AG04449 (cell line): ENCODE measurements at regions of chr10 and their contacts with region 1.

Region 1: DNA sequence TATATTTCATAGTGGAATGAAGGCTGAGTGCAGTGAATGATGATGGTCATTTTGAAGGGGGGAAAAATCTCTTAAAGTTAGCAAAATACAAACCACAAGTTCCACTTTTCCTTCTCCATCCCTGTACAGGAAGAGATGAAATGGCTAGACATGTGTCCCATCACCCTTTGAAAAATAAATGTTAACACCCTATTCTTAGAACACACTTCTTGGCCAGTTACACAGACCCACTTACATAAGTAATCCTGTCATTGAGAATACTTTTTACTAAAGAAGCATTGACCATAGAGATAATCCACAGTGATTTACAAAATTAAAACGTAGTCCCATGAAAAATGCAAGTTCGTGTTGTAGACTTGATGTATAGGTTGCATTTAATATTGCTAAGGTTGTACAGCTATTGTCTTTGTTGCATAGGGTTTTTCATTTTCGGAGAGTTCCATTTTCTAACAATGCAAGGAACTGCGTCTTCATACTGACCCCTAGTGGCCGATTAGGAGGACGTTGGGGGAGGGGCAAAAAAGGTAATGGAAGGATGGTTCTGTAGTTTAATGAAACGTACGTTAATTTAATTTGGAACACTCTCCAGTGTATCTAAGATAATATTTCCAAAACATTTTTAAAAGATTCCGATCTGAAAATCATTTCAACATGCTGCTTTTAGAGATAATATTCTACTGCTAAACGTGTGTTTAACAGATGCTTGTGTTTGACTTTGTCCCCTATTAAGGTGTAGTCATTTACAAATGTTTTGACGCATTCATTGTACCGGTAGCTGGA is 60.9 kb downstream of the ARMC3 start:
- DNase-seq: no peak
- H3K4me3 ChIP-seq: no peak overlapping the region
- CTCF ChIP-seq: peak; percentile 76

Region 2: DNA sequence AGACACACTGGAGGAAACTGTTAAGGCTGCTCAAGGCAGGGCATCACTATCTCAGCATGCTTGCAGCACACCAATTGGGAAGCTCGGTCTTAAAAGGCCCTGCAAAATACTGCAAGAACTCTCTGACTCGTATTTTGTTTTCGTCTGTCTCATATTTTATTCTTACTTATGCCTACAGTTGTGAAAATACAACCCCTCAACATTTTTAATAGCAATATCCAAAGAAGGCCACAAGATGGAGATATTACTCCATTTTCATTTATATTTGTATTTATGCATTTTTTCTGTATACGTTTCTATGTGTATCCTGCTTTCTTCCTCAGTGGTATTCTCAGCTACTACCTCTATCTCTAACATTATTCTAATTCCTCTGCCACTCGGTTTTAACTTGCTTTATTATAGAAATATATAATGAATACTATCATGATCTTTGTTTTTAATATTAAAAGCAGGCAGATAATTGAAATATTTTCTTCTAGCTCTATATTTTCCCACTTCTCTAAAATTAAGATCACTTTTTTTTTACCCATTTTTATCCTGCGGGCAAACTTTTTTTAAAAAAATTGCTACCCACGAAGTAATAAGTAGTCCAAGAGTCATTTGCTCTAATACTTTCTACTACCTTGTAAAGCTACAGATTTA is 995.3 kb before region 1 on chr10:
- CTCF ChIA-PET with region 1: interaction called, 36 read pairs
- POLR2A ChIA-PET with region 1: no interaction called
- DNase-seq: no peak
- H3K4me3 ChIP-seq: no peak overlapping the region
- CTCF ChIP-seq: no peak

Region 3: DNA sequence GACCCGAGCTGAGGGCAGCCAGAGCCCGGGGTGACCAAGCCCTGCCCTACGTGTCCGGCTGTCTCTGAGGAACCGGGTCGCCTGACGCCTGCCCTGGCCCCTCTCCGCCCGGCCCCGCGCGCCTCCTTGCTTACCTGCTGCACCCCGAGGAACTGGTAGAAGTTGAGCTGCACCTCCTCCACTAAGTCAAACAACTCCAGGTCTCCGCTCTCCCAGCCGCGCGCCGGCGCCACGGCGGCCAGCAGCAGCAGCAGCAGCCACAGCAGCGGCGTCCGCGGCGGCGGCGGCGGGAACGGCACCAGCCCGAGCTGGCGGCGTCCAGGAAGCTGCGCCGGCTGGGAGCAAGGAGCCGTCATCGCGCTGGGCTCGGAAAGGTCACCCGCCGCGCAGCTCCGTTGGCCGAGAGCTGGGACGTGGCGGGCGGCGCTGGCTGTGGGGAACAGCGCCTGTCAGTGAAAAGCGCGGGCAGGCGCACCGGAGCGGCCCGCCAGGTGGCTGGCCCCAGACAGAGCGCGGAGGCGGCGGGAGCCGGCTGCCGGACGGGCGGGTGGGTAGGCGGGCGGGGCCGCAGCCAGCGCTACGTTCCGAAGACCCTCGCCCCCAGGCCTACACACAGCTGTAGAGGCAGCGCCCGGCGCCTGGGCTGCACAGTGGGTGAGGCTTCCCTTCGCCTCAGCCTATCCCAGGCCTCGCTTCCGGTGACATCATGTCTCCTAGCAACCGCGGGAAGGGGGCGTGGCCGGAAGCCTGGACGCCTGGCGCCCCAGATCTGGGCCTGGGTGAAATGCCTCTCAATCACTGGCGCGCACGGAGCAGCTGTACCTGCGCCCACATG is 985.5 kb before region 1 on chr10 and contains the start of gene DNAJC1:
- CTCF ChIA-PET with region 1: interaction called, 90 read pairs
- POLR2A ChIA-PET with region 1: no interaction called
- DNase-seq: peak; percentile 46
- H3K4me3 ChIP-seq: peak within 1 kb of the TSS; percentile 89
- CTCF ChIP-seq: no peak

Region 4: GRCh38 chr10:22010973-22011408 is 977.8 kb before region 1 on chr10:
- CTCF ChIA-PET with region 1: interaction called, 90 read pairs
- POLR2A ChIA-PET with region 1: no interaction called
- DNase-seq: no peak
- H3K4me3 ChIP-seq: no peak overlapping the region
- CTCF ChIP-seq: no peak

Region 5: GRCh38 chr10:22573820-22574569 is 414.8 kb before region 1 on chr10:
- CTCF ChIA-PET with region 1: interaction called, 90 read pairs
- POLR2A ChIA-PET with region 1: no interaction called
- DNase-seq: no peak
- H3K4me3 ChIP-seq: no peak overlapping the region
- CTCF ChIP-seq: peak; percentile 42

Region 6: DNA sequence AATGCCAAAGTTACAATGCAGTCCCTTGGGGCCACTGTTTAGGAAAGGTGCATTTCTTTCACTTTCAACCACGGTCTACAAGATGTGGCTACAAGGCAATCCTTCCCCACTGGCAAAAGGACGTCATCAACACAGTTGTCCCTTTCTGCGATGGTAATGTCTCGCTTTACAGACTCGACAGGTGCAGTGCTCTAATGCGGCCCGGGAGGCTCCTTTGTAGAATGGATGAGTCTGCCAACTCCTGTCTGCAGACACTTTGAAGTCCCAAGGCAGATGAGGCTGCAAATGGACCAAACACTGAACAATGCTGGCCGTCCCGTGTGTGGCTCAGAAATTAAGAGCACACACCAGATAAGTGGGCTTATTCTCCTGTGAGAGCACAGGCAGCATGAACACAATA is 408.1 kb before region 1 on chr10:
- CTCF ChIA-PET with region 1: interaction called, 90 read pairs
- POLR2A ChIA-PET with region 1: no interaction called
- DNase-seq: no peak
- H3K4me3 ChIP-seq: no peak overlapping the region
- CTCF ChIP-seq: no peak